PC-3 (cell line): ENCODE measurements at regions of chr2 and their contacts with region 1.

Region 1: DNA sequence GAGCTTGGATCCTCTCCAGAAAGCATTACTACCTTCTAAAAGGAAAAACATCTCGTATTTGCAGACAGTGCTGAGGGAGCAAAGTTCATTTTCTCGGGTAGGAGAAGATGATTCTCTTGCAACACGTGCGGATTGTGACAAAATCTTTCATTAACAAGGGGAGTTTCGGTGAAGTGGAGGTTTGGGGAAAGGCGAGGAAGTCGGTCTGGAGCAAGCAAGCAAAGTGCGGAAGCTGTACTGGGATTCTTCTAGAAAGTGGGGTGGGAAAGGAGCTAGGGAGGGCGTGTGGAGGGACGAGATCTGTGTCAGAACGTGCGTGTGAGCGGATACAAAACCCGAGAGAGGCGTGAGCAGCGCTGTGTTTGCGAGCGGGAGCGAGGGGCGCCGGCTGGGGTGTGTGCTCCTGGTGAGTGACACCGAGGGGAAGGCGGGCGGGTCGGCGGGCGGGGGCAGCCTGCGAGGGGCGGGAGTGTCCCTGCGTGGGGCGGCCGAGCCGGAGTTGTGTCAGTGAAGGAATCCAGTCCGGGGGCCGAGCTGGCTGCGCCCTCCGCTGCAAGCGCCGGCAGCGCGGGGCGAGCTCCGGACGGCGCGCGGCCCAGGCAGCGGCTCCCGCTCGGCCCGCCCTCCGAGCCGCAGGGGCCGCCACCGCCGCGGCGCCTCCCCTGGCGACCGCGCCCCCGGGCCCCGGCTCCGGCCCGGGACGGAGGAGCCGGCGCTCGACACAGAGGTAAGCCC is at the start of gene SPATS2L:
- DNase-seq: peak; percentile 84
- ATAC-seq: peak; percentile 62
- H3K4me3 ChIP-seq: peak within 1 kb of the TSS; percentile 85
- H3K27ac ChIP-seq: peak within 1 kb of the TSS; percentile 79
- H3K4me1 ChIP-seq: peaks cover 67% of the 10 kb centered on the region
- H3K27me3 ChIP-seq: no peaks in the 10 kb centered on the region
- CTCF ChIP-seq: no peak
- total RNA-seq, gene SPATS2L: 144 and 174 TPM in 2 replicates

Region 2: GRCh38 chr2:199979832-199980628 is 326.3 kb before region 1 on chr2:
- CTCF ChIA-PET with region 1: interaction called, 4 read pairs
- POLR2A ChIA-PET with region 1: interaction called, 5 read pairs
- intact Hi-C with region 1: loop called (anchors 1 kb)
- DNase-seq: peak; percentile 89
- ATAC-seq: peak; percentile 52
- H3K4me3 ChIP-seq: no peak overlapping the region
- H3K27ac ChIP-seq: no peak overlapping the region
- H3K4me1 ChIP-seq: peaks cover 26% of the 10 kb centered on the region
- H3K27me3 ChIP-seq: no peaks in the 10 kb centered on the region
- CTCF ChIP-seq: peak; percentile 96

Region 3: DNA sequence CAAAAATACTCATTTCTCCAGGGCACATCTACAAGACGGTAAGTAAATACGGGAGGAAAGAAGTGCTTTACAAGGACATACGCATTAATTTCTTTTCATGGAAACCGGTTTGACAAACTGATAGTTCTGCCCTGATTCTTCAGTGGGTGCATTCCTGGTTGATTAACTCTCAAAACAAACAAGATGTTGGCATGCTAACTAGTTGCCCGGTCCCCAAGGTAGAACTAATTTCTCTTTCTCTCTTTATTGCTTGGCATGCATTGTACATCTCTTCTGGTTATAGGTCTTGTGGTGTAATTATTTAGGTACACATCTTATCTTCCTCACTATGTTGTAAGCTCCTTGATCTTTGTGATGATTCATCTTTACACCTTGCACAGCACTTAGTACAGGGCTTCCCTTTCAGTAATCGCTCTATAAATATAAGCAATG is 46.8 kb before region 1 on chr2:
- CTCF ChIA-PET with region 1: no interaction called
- POLR2A ChIA-PET with region 1: interaction called, 4 read pairs
- intact Hi-C with region 1: loop called (anchors 1 kb)
- DNase-seq: peak; percentile 97
- ATAC-seq: peak; percentile 89
- H3K4me3 ChIP-seq: peak overlapping the region; percentile 58
- H3K27ac ChIP-seq: peak overlapping the region; percentile 94
- H3K4me1 ChIP-seq: peaks cover 30% of the 10 kb centered on the region
- H3K27me3 ChIP-seq: no peaks in the 10 kb centered on the region
- CTCF ChIP-seq: no peak

Region 4: DNA sequence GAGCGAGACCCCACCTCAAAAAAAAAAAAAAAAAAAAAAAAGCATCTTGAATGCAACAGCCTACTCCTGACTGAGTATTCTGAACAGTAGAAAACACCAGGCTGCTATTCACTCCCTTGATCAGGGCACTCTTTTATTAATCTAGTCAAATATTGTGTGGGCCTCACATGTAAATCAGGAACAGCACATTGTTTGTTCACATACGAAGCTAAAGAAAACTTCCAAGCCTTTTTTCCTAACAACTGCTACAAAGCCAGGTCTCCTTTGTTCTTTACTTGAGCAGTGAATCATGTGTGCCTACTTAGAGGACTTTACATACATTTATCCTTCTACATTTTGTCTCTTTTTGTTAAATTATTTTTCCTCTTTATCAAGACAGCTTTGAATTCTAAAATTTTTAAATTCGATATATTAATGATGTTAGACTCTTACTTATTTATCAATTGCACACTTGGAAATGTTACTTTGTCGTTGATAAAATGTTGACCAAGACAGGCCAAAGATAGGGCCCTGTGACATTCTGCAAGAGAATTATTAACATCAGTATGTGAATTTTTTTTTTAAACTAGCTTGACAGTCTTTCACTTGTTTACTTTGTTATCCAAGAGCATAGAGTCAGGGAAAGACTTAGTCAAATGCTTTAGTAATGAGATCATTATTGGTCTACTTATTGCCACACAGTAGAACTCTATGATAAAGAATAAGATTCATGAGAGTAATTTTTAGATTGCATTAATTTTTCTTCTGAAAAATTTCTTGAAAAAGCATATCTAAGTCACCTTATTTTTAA is 13.4 kb after region 1 on chr2:
- CTCF ChIA-PET with region 1: no interaction called
- POLR2A ChIA-PET with region 1: interaction called, 5 read pairs
- intact Hi-C with region 1: loop called (anchors 2 kb)
- DNase-seq: peak; percentile 78
- ATAC-seq: peak; percentile 43
- H3K4me3 ChIP-seq: peak overlapping the region; percentile 16
- H3K27ac ChIP-seq: peak overlapping the region; percentile 92
- H3K4me1 ChIP-seq: peaks cover 60% of the 10 kb centered on the region
- H3K27me3 ChIP-seq: no peaks in the 10 kb centered on the region
- CTCF ChIP-seq: no peak

Region 5: GRCh38 chr2:200373973-200374416 is 67.6 kb after region 1 on chr2:
- CTCF ChIA-PET with region 1: no interaction called
- POLR2A ChIA-PET with region 1: interaction called, 8 read pairs
- intact Hi-C with region 1: loop called (anchors 2 kb)
- DNase-seq: peak; percentile 66
- ATAC-seq: peak; percentile 51
- H3K4me3 ChIP-seq: peak overlapping the region; percentile 36
- H3K27ac ChIP-seq: peak overlapping the region; percentile 40
- H3K4me1 ChIP-seq: peaks cover 54% of the 10 kb centered on the region
- H3K27me3 ChIP-seq: no peaks in the 10 kb centered on the region
- CTCF ChIP-seq: no peak

Region 6: DNA sequence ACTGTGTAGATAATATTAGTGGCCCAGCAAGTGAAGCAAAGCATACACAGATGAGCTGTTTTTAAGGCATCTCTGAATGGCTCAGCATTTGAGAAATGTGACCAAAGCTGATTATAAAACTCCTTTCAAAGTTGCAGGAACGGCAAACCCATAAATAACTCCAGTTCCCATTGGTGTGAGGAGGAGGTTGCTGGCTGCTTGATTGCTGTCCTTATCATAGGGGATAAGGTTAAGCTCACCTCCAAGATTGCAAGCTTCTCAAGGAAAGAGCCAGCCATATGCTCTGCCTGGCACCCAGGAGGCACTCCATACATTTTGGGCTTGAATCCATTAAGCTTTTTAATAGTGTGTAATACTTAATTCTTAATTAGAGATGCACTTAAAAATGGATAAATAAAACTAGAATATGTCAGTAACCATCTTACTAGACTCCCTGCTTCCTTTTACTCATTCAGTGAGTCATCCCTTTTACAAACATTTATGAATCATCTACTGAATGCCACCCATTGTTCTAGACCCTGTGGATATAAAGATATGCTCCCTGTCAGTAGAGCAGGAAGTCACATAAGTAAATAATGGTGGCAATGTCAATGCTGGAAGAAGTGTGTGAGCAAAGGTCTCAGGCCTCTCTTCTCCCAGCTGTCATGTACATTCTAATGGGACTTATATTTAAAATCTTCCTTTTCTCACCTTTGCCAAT is 99.4 kb after region 1 on chr2:
- CTCF ChIA-PET with region 1: no interaction called
- POLR2A ChIA-PET with region 1: no interaction called
- intact Hi-C with region 1: loop called (anchors 5 kb)
- DNase-seq: peak; percentile 96
- ATAC-seq: peak; percentile 85
- H3K4me3 ChIP-seq: peak overlapping the region; percentile 51
- H3K27ac ChIP-seq: peak overlapping the region; percentile 99
- H3K4me1 ChIP-seq: peaks cover 70% of the 10 kb centered on the region
- H3K27me3 ChIP-seq: no peaks in the 10 kb centered on the region
- CTCF ChIP-seq: no peak

Region 7: DNA sequence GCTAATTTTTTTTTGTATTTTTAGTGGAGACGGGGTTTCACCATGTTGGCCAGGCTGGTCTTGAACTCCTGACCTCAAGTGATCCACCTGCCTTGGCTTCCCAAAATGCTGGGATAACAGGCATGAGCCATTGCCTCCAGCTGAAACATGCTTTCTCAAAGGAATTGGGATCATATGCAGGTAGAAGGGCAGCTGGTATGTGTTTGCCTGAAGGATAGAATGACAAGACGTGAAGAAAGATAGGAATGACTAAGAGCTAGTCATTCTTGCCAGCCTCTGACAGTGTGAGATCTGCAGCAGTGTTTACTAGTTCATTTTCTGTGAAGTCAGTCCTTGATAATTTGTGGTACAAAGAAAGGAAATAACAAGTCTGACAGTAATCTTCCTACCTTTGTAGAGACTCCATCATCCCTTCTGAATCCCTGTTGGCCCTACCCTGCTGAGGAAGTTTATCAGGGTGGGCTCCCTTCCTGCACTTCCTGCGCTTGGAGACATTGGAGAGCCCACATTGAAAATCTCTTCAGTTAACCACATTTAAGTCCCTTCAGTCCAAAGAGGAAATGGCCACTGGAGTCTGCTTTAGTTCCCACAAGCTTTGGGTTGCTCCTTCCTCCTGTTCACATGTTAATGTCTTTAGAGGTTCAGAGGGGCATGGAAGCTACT is 824.3 kb after region 1 on chr2:
- CTCF ChIA-PET with region 1: no interaction called
- POLR2A ChIA-PET with region 1: no interaction called
- intact Hi-C with region 1: no loop called
- DNase-seq: peak; percentile 88
- ATAC-seq: peak; percentile 97
- H3K4me3 ChIP-seq: no peak overlapping the region
- H3K27ac ChIP-seq: peak overlapping the region; percentile 79
- H3K4me1 ChIP-seq: peaks cover 27% of the 10 kb centered on the region
- H3K27me3 ChIP-seq: no peaks in the 10 kb centered on the region
- CTCF ChIP-seq: no peak